ENCODE measurements at regions of chr1 and their contacts with region 1.

Region 1: DNA sequence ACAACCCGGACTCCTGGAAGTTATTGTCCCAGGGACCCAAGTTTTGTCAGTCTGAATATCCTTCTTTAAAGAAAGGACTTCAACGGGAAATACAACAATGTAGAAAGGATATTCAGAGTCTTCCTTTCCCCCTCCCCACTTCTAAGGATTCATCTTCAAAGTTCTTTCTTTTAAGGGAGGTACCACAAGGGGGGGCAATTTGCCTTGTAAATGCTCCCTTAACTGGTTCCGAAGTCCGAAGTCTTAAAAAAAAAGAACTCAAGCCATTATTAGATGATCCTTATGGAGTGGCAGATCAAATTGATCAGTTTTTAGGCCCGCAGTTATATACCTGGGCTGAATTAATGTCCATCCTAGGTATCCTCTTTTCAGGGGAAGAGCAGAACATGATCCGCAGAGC is 47.0 kb downstream of the SERINC2 start:
- DNase-seq: peak; percentile 31 to 45 (median 34)
- ATAC-seq: no peak
- H3K4me3 ChIP-seq: no peak overlapping the region
- H3K27ac ChIP-seq: no peak overlapping the region
- H3K4me1 ChIP-seq: no peaks in the 10 kb centered on the region
- H3K27me3 ChIP-seq: peaks cover 2 to 4% of the 10 kb centered on the region in 2 experiments; a peak in 2 of 5 replicates
- CTCF ChIP-seq: peak; percentile 40 to 68 (median 53); a peak in 5 of 6 replicates
- EP300 ChIP-seq: no peak
- POLR2A ChIP-seq: no peak
- RAD21 ChIP-seq: peak; percentile 63 to 87

Region 2: DNA sequence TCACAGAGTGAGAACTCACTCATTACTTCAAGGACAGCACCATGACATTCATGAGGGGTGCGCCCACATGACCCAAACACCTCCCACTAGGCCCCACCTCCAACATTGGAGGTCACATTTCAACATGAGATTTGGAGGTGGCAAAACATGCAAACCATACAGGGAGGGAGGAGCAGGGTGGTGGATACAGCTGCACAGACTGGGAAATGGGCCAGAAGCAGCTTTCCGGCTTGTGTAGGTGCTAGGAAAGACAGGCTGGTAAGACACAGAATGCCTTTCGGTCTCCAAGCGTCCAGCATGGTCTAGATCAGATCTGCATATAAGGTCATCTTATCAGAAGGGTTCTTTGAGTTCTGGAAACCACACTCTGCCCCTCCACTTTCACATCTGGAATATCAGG is 81.2 kb after region 1 on chr1:
- CTCF ChIA-PET with region 1: interaction called, 3 read pairs
- POLR2A ChIA-PET with region 1: no interaction called
- in situ Hi-C with region 1: loop called (anchors 5 kb)
- intact Hi-C with region 1: no loop called
- DNase-seq: no peak
- ATAC-seq: no peak
- H3K4me3 ChIP-seq: no peak overlapping the region
- H3K27ac ChIP-seq: no peak overlapping the region
- H3K4me1 ChIP-seq: no peaks in the 10 kb centered on the region
- H3K27me3 ChIP-seq: peaks cover 14 to 39% of the 10 kb centered on the region in 2 experiments
- CTCF ChIP-seq: no peak
- EP300 ChIP-seq: no peak
- POLR2A ChIP-seq: no peak
- RAD21 ChIP-seq: no peak